Cardiac septum (tissue), 1 donor: ENCODE measurements at regions of chr11 and their contacts with region 1.

Region 1: GRCh38 chr11:86244522-86245368 is at the start of gene EED:
- DNase-seq: peak; percentile 98
- total RNA-seq, gene EED: 12.0 TPM

Region 2: DNA sequence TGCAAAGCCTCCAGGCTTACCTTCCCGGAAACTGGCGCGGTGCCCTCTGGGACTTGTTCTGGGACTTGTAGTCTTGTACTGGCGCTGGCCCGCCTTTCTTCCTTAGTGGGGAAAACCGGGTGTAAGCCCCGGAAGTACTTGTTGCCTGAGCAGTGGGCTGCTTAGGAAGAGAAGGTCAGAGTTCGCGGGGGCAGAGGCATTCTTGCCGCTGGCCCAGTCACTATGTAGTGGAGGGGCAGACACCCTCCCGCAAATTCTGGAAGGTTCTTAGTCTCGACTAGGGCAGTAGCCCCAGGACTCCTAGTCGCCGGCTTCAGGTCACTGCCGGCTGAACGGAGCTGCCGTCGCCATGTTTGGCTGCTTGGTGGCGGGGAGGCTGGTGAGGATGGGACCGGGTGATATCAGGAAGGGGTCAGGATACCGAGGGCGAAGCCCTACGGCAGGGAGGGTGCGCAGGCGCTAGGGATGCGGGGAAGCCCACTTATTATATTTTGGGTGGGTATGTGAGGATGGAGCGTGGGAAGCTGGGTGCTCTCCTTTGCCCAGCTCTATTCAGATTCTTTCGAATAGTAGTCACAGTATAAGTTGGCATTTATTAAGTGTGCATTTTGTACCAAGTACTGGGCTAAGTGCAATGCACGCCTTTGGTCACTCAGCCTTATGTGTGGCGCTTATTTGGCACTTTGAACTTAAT is 57.5 kb after region 1 on chr11 and contains the start of gene HIKESHI:
- intact Hi-C with region 1: loop called (anchors 1 kb)
- DNase-seq: peak; percentile 99
- total RNA-seq, gene HIKESHI: 37.4 TPM

Region 3: DNA sequence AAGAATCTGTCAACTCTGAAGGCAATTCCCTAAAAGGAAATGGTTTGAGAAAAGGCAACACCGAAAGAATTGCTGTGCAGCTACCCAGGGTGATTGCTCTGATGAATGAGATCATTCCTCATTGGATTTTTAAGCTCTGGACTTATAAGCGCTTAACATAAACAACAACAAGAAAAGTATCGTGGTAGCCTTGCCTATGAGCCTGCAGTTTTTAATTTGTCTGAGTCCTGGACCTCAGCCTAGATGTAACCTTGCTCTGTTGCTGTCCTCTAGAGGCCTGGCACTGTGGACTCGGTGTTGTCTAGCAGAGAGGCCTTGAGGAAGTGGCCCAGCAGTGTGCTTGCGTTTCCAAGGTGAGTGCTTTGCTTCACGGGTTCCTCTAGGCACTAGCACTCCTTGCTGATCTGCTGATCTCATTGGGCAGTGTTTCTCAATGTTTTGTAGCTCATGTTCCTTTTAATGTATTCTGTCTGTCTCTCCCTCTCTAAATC is 150.4 kb after region 1 on chr11:
- intact Hi-C with region 1: no loop called
- DNase-seq: no peak

Region 4: DNA sequence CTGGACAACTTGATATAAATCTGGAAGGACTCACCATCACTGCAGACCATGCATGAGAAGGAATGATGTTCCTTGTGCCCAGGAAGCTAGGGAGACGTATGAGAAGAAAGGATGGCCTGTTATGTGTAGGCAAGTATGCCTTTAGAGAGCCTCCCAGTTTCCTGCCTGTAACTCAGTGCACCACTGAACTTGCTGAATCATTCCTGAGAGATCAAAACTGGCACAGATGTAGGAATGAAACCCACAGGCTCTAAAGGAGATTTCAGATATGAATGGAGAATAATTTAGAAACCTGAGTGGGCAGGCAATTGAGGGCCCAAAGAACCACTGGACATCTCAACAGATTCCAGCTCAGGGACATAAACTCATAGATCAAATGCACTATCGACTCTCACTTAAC is 517.2 kb after region 1 on chr11:
- intact Hi-C with region 1: no loop called
- DNase-seq: no peak